Tibial artery (tissue), 4 donors: ENCODE measurements at regions of chr12 and their contacts with region 1.

Region 1: GRCh38 chr12:123150744-123151456 is at the start of gene PITPNM2:
- DNase-seq: peak; percentile 51 to 79
- H3K4me3 ChIP-seq: peak within 1 kb of the TSS; percentile 65 to 85
- H3K27ac ChIP-seq: peak within 1 kb of the TSS; percentile 85 to 91
- H3K4me1 ChIP-seq: peaks cover 0 to 19% (median 19%) of the 10 kb centered on the region in 4 donors
- H3K27me3 ChIP-seq: no peaks in the 10 kb centered on the region
- CTCF ChIP-seq: peak in 1 of 2 experiments; percentile 76

Region 2: DNA sequence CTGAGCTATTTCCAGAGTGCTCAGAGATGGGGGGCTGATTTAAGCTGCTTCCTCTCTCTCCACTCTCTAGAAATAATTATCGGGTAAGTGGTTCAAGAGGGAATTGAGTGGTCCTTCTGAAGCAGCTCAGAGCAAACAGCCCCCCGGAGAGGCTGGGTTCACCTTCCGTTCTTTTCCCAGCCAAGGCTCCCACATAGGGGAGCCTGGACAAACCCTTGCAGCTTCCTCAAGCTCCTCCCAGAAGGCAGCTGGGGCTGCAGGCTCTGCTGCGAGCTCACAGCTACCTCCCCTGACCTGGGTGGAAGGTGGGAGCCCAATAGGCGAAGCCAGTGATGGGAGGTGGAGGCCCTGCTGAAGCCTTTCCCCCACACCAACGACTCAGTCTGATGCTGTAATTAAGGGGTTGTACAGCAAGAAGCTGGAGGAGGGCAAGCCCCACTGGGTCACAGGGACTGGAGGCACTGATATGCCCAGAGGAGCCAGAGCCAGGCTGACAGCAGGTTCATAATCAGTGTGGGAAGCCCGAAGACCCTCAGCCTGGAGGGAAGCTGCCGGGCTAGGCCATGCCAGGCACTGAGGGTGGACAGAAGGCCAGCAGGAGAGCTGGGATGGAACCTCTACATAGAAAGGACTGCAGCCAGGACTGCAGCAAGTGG is 118.0 kb before region 1 on chr12:
- intact Hi-C with region 1: no loop called
- DNase-seq: no peak
- H3K4me3 ChIP-seq: no peak overlapping the region
- H3K27ac ChIP-seq: no peak overlapping the region
- H3K4me1 ChIP-seq: no peaks in the 10 kb centered on the region
- H3K27me3 ChIP-seq: no peaks in the 10 kb centered on the region
- CTCF ChIP-seq: no peak

Region 3: DNA sequence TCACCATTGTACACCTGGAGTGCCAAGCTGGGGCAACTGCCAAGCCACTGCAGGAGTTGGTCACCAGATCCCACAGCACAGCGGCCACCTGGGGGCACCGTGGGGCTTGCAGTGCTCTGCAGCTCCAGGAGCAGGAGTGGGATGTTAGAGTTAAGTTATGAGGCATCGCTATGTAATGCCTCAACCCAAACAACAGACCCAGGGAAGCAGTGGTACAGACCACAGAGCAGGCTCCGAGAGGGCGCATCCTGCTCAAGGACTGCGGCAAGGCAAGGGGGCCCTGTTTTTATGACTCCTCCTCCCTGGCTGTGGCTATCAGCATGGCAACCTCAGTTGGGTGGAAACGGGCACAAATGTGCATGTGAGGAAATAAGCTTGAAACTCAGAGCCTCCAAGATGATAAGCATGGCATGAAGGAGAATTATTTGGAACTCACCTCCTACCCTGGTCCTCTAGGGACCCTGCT is 107.3 kb before region 1 on chr12:
- intact Hi-C with region 1: loop called (anchors 2 kb)
- DNase-seq: peak; percentile 79 to 92
- H3K4me3 ChIP-seq: no peak overlapping the region
- H3K27ac ChIP-seq: peak overlapping the region; percentile 56 to 62
- H3K4me1 ChIP-seq: peaks cover 0 to 14% (median 12%) of the 10 kb centered on the region in 4 donors
- H3K27me3 ChIP-seq: no peaks in the 10 kb centered on the region
- CTCF ChIP-seq: peak; percentile 78 to 86

Region 4: DNA sequence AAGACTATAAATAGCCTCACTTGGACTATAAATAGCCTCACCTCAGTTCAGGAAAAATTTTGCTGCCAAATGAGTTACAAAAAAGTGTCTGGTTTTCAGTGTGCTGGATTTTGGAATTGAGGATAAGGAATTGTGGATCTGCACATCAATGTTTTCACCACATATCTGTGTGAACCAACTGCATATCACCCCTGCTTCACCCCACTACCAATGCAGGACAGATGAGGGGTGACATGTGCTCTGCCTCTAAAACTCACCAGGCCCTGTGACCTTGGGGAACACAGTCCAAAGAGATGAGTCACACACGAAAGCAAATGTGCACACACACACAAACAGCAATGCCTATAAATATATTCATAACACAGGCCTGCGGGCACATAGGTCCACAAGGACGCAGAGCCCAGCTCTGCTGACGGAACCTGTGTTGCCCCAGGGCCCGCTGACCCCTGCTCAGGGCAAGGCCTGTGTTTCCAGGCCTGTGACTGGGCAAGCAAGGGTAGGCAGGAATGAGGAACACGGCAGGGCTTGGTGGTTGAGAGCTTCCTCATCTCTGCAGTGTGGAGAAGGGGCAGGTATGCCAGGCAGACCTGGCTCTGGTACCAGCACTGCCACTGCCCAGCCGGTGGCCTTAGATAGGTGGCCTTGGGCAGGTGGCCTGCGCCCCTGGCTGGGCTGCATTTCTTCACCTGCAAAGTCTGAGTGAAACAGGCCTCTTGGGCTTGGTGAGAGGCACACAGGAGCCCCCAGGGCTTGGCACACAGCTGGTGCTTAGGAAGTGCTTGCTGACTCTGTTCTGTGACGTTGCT is 88.0 kb before region 1 on chr12:
- intact Hi-C with region 1: loop called (anchors 5 kb)
- DNase-seq: peak; percentile 57 to 89
- H3K4me3 ChIP-seq: no peak overlapping the region
- H3K27ac ChIP-seq: peak overlapping the region; percentile 85 to 88
- H3K4me1 ChIP-seq: peaks cover 16 to 63% (median 51%) of the 10 kb centered on the region in 4 donors
- H3K27me3 ChIP-seq: no peaks in the 10 kb centered on the region
- CTCF ChIP-seq: peak in 1 of 2 experiments; percentile 4

Region 5: DNA sequence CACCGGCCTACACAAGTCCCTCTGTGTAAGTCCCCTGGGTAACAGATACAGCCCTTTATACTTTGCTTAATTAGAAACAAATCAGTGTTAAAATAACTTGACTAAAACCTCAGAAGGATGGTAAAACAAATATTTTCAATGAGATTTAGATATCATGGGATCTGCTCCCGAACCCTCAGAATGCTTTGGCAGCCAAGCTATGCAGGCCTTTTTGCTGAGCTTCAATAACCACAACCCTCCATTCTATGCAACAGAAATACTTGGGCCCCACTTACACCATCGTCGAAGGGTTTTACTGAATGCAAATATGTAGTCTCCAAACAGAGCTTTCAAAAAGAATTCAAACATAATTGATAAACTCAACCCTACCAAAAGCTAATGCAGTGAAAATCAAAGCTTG is 29.3 kb after region 1 on chr12:
- intact Hi-C with region 1: no loop called
- DNase-seq: no peak
- H3K4me3 ChIP-seq: no peak overlapping the region
- H3K27ac ChIP-seq: no peak overlapping the region
- H3K4me1 ChIP-seq: no peaks in the 10 kb centered on the region
- H3K27me3 ChIP-seq: no peaks in the 10 kb centered on the region
- CTCF ChIP-seq: no peak

Region 6: GRCh38 chr12:123232807-123233543 is 82.1 kb after region 1 on chr12 and contains the starts of genes MPHOSPH9 and MTRFR:
- intact Hi-C with region 1: loop called (anchors 10 kb)
- DNase-seq: peak; percentile 99 to 100
- H3K4me3 ChIP-seq: peak within 1 kb of the TSS; percentile 81 to 89
- H3K27ac ChIP-seq: peak within 1 kb of the TSS; percentile 90 to 95
- H3K4me1 ChIP-seq: peaks cover 0 to 40% (median 24%) of the 10 kb centered on the region in 4 donors
- H3K27me3 ChIP-seq: peaks cover 0 to 4% of the 10 kb centered on the region in 2 donors
- CTCF ChIP-seq: peak in 1 of 2 experiments; percentile 8